ENCODE measurements at regions of chr18 and their contacts with region 1.

Region 1: GRCh38 chr18:11149441-11150270 is at the start of gene PIEZO2:
- DNase-seq: peak; percentile 65
- ATAC-seq: peak; percentile 98
- H3K4me3 ChIP-seq: peak within 1 kb of the TSS; percentile 69
- H3K27ac ChIP-seq: peak within 1 kb of the TSS; percentile 36; the same call in 1 of the 2 replicates
- H3K4me1 ChIP-seq: peaks cover 5% of the 10 kb centered on the region; the same call in 1 of the 2 replicates
- H3K27me3 ChIP-seq: peaks cover 12% of the 10 kb centered on the region
- CTCF ChIP-seq: no peak
- POLR2A ChIP-seq: no peak
- RAD21 ChIP-seq: no peak
- total RNA-seq, gene PIEZO2: 3.3 and 4.1 TPM in 2 replicates

Region 2: GRCh38 chr18:10787293-10787901 is 362.3 kb before region 1 on chr18:
- CTCF ChIA-PET with region 1: interaction called, 4 read pairs
- POLR2A ChIA-PET with region 1: no interaction called
- dilution Hi-C with region 1: no loop called
- in situ Hi-C with region 1: no loop called
- intact Hi-C with region 1: loop called (anchors 1 kb)
- DNase-seq: peak; percentile 80
- ATAC-seq: peak; percentile 79
- H3K4me3 ChIP-seq: no peak overlapping the region
- H3K27ac ChIP-seq: no peak overlapping the region
- H3K4me1 ChIP-seq: peaks cover 3% of the 10 kb centered on the region
- H3K27me3 ChIP-seq: no peaks in the 10 kb centered on the region
- CTCF ChIP-seq: peak; percentile 84
- POLR2A ChIP-seq: no peak
- RAD21 ChIP-seq: peak; percentile 75

Region 3: DNA sequence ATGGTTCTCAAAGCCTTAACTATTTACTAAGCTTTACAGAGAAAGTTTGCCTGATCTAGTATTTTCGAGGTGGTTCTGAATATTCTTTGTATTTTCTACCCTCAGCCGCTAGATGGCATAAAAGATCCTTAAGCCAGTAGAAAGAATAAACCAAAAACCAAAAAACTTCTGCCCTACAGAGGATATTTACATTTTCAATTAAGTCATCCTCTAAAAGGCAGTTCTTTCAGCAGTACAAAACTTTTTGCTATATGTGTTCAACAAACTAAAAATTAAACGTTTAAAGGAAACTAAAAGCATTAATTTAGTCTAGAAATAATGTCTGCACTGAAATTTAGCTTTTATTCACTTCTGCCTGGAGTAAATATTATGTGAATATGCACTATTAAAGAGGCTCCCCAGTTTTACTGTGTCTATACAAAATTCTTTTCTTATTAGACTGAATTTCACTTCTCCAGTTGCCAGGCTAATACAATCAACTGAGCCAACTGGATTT is 297.8 kb before region 1 on chr18:
- CTCF ChIA-PET with region 1: interaction called, 19 read pairs
- POLR2A ChIA-PET with region 1: interaction called, 4 read pairs
- dilution Hi-C with region 1: no loop called
- in situ Hi-C with region 1: loop called (anchors 5 kb)
- intact Hi-C with region 1: loop called (anchors 1 kb)
- DNase-seq: peak; percentile 81
- ATAC-seq: peak; percentile 90
- H3K4me3 ChIP-seq: no peak overlapping the region
- H3K27ac ChIP-seq: peak overlapping the region; percentile 50; the same call in 1 of the 2 replicates
- H3K4me1 ChIP-seq: peaks cover 2% of the 10 kb centered on the region; the same call in 1 of the 2 replicates
- H3K27me3 ChIP-seq: no peaks in the 10 kb centered on the region
- CTCF ChIP-seq: peak; percentile 93
- POLR2A ChIP-seq: no peak
- RAD21 ChIP-seq: peak; percentile 93

Region 4: GRCh38 chr18:10928772-10929373 is 220.8 kb before region 1 on chr18:
- CTCF ChIA-PET with region 1: no interaction called
- POLR2A ChIA-PET with region 1: no interaction called
- dilution Hi-C with region 1: no loop called
- in situ Hi-C with region 1: no loop called
- intact Hi-C with region 1: loop called (anchors 5 kb)
- DNase-seq: peak; percentile 97
- ATAC-seq: peak; percentile 33; the same call in 1 of the 2 replicates
- H3K4me3 ChIP-seq: no peak overlapping the region
- H3K27ac ChIP-seq: peak overlapping the region; percentile 95; the same call in 1 of the 2 replicates
- H3K4me1 ChIP-seq: peaks cover 21% of the 10 kb centered on the region
- H3K27me3 ChIP-seq: no peaks in the 10 kb centered on the region
- CTCF ChIP-seq: no peak
- POLR2A ChIP-seq: no peak
- RAD21 ChIP-seq: no peak

Region 5: GRCh38 chr18:11078491-11078890 is 71.2 kb before region 1 on chr18:
- CTCF ChIA-PET with region 1: no interaction called
- POLR2A ChIA-PET with region 1: no interaction called
- dilution Hi-C with region 1: no loop called
- in situ Hi-C with region 1: no loop called
- intact Hi-C with region 1: no loop called
- DNase-seq: no peak
- ATAC-seq: no peak; the same call in 1 of the 2 replicates
- H3K4me3 ChIP-seq: no peak overlapping the region
- H3K27ac ChIP-seq: no peak overlapping the region
- H3K4me1 ChIP-seq: peaks cover 2% of the 10 kb centered on the region; the same call in 1 of the 2 replicates
- H3K27me3 ChIP-seq: no peaks in the 10 kb centered on the region
- CTCF ChIP-seq: no peak
- POLR2A ChIP-seq: no peak
- RAD21 ChIP-seq: no peak

Region 6: DNA sequence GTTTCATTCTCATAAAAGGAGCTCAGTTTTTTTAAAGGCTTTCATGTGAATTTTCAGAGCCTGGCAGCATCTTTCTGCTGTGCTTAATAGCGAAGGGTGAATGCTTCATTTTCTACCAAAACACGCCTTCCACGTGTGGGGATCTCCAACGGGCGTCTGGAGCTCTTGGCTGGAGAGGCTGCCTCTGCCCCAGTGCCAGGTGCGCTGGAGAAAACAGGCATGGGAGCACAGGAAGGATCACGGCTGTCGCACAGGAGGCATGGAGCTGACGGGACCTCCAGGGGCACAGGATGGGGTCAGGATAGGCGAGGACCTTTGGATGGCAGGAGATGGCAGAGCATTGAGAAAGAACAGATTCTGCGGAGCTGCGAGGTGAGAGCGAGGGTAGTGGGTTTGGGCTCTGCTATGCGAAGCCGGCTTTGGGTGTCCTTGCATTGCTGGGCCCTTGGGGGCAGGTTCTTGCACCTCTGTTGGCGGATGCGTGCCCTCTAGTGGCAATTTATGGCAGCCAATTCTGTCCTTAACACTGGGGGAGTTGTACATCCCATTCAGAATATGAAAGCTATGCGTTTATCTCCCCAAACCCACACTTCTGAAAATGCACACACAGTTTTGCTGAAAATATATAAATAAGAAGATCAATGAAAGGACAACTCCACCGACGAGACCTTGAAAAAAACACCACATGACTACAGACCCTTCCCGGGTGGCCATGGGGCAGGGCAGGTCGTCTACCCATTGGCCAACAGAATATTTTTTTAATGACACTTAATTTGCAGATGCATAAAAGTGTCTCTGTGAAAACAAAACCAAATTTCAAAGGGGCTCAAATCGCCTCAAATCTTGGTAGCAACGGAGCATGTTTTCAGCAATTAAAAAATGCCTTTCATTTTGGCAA is 369.4 kb after region 1 on chr18:
- CTCF ChIA-PET with region 1: no interaction called
- POLR2A ChIA-PET with region 1: no interaction called
- dilution Hi-C with region 1: no loop called
- in situ Hi-C with region 1: no loop called
- intact Hi-C with region 1: loop called (anchors 10 kb)
- DNase-seq: peak; percentile 55
- ATAC-seq: peak; percentile 86
- H3K4me3 ChIP-seq: no peak overlapping the region
- H3K27ac ChIP-seq: no peak overlapping the region
- H3K4me1 ChIP-seq: no peaks in the 10 kb centered on the region
- H3K27me3 ChIP-seq: peaks cover 2% of the 10 kb centered on the region; the same call in 1 of the 2 replicates
- CTCF ChIP-seq: peak; percentile 71
- POLR2A ChIP-seq: no peak
- RAD21 ChIP-seq: peak; percentile 70

Region 7: DNA sequence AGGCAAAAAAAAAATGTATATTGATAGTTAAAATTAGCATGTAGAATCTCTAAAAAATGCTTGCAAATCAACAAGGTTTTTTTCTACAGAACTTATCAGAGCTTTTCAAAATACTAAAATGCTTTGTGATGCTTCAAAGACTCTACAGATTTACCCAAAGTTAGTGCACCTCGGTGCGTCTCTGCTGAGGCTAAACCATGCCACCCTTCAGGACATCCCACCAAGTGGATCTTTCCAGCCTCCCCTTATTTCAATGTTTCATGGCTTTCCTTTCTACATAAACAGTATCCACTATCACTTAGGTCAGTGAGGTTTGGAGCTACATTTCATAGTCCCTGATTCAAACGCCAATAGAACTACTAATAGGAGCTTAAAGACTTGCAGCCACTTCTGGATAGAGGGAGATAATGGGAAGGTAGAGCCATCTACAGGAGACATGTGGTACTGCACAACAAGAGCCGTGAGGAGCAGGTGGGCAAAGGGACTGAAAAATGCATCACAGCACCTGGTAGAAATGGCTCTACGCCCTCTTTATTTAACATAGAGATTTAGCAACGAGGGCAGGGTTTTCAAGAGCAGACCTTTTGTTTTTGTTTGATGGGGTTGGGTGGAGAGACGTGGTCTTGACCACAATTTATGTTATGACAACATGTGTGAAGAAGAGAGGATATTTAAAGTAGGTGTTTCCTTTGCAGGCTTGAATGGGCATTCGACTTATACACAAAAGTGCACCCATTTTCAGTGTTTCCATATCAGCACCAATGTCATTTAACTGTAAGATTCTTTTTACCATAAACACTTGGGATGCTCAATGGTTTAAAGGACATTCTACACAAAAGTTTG is 403.7 kb after region 1 on chr18:
- CTCF ChIA-PET with region 1: interaction called, 3 read pairs
- POLR2A ChIA-PET with region 1: no interaction called
- dilution Hi-C with region 1: no loop called
- in situ Hi-C with region 1: no loop called
- intact Hi-C with region 1: loop called (anchors 1 kb)
- DNase-seq: peak; percentile 59
- ATAC-seq: peak; percentile 99
- H3K4me3 ChIP-seq: no peak overlapping the region
- H3K27ac ChIP-seq: no peak overlapping the region
- H3K4me1 ChIP-seq: no peaks in the 10 kb centered on the region
- H3K27me3 ChIP-seq: peaks cover 9% of the 10 kb centered on the region
- CTCF ChIP-seq: peak; percentile 86
- POLR2A ChIP-seq: no peak
- RAD21 ChIP-seq: peak; percentile 89